CD8-positive, alpha-beta T cell (primary cell): ENCODE measurements at regions of chr2 and their contacts with region 1.

Region 1: GRCh38 chr2:201780674-201781581 is at the start of gene ALS2:
- DNase-seq: peak; percentile 88 to 97 (median 94)
- ATAC-seq: peak; percentile 91
- H3K4me3 ChIP-seq: peak within 1 kb of the TSS; percentile 80 to 89
- H3K4me3 Mint-ChIP-seq: peak within 1 kb of the TSS; percentile 98
- H3K27ac ChIP-seq: peak within 1 kb of the TSS; percentile 94
- H3K27ac Mint-ChIP-seq: peak within 1 kb of the TSS; percentile 98
- H3K4me1 ChIP-seq: peaks cover 16% of the 10 kb centered on the region
- H3K4me1 Mint-ChIP-seq: peaks cover 27% of the 10 kb centered on the region
- H3K27me3 ChIP-seq: no peaks in the 10 kb centered on the region
- H3K27me3 Mint-ChIP-seq: peaks cover 3% of the 10 kb centered on the region
- CTCF ChIP-seq: no peak
- total RNA-seq, gene ALS2: 6.6 to 9.0 TPM

Region 2: GRCh38 chr2:200373973-200374416 is 1406.9 kb before region 1 on chr2:
- CTCF ChIA-PET with region 1: no interaction called
- POLR2A ChIA-PET with region 1: no interaction called
- intact Hi-C with region 1: loop called in 1 of 2 experiments (anchors 10 kb)
- DNase-seq: peak in 7 of 9 experiments; percentile 4 to 79 (median 25)
- ATAC-seq: peak; percentile 92
- H3K4me3 ChIP-seq: peak overlapping the region; percentile 51 to 69
- H3K4me3 Mint-ChIP-seq: peak overlapping the region; percentile 87
- H3K27ac ChIP-seq: peak overlapping the region; percentile 40 to 52
- H3K27ac Mint-ChIP-seq: peak overlapping the region; percentile 90
- H3K4me1 ChIP-seq: peaks cover 23% of the 10 kb centered on the region
- H3K4me1 Mint-ChIP-seq: peaks cover 44% of the 10 kb centered on the region
- H3K27me3 ChIP-seq: no peaks in the 10 kb centered on the region
- H3K27me3 Mint-ChIP-seq: no peaks in the 10 kb centered on the region
- CTCF ChIP-seq: no peak

Region 3: GRCh38 chr2:200525882-200526651 is 1254.9 kb before region 1 on chr2 and contains the start of gene SGO2:
- CTCF ChIA-PET with region 1: no interaction called
- POLR2A ChIA-PET with region 1: no interaction called
- intact Hi-C with region 1: loop called (anchors 5 kb)
- DNase-seq: peak; percentile 92 to 97 (median 95)
- ATAC-seq: peak; percentile 100
- H3K4me3 ChIP-seq: peak within 1 kb of the TSS; percentile 73 to 84
- H3K4me3 Mint-ChIP-seq: peak within 1 kb of the TSS; percentile 91
- H3K27ac ChIP-seq: peak within 1 kb of the TSS; percentile 18 to 71
- H3K27ac Mint-ChIP-seq: peak within 1 kb of the TSS; percentile 87
- H3K4me1 ChIP-seq: peaks cover 7% of the 10 kb centered on the region
- H3K4me1 Mint-ChIP-seq: peaks cover 10% of the 10 kb centered on the region
- H3K27me3 ChIP-seq: no peaks in the 10 kb centered on the region
- H3K27me3 Mint-ChIP-seq: no peaks in the 10 kb centered on the region
- CTCF ChIP-seq: no peak
- total RNA-seq, gene SGO2: 0.52 to 0.69 TPM

Region 4: DNA sequence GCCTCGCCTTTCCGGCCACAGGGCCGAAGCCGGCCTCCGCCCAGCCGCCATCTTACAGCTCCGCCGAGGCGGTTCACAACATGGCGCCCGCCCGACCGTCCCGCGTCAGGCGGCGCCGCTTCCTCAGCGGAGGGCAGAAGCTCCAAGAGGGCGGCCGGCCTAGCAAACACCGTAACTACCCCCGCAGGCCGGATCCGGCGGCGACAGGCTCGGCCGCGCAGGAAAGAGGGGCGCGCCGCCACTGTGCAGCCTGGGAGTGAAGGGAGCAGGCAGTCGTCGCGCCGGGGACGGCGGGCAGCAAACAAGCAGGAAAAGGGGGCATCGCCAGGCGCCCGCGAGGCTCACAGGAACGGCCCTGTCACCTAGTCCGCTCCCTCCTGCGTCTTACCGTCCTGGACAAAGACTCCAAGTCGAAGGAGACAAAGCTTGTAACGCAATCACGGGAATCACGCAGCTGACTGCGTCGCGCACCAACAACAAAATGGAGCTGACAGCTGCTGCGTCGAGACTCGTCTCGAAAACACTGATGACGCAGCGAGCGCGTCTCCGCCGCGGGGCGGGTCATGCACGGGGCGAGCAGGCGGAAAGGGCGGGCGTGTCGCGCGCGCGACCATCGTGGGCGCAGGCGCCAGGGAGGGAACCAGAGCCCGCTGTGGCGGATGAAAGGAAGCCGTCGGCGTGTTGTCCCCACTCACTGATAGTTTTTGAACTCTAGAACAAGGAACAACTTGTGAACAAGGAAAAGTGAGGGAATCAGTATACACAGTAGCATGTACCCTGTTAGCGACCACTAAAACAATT is 916.6 kb before region 1 on chr2 and contains the start of gene CLK1:
- CTCF ChIA-PET with region 1: no interaction called
- POLR2A ChIA-PET with region 1: interaction called, 12 read pairs
- intact Hi-C with region 1: loop called in 1 of 2 experiments (anchors 2 kb)
- DNase-seq: peak; percentile 94 to 99 (median 98)
- ATAC-seq: peak; percentile 78
- H3K4me3 ChIP-seq: peak within 1 kb of the TSS; percentile 84 to 98
- H3K4me3 Mint-ChIP-seq: peak within 1 kb of the TSS; percentile 96
- H3K27ac ChIP-seq: peak within 1 kb of the TSS; percentile 98 to 100
- H3K27ac Mint-ChIP-seq: peak within 1 kb of the TSS; percentile 100
- H3K4me1 ChIP-seq: peaks cover 29% of the 10 kb centered on the region
- H3K4me1 Mint-ChIP-seq: peaks cover 43% of the 10 kb centered on the region
- H3K27me3 ChIP-seq: no peaks in the 10 kb centered on the region
- H3K27me3 Mint-ChIP-seq: no peaks in the 10 kb centered on the region
- CTCF ChIP-seq: no peak
- total RNA-seq, gene CLK1: 1,353 to 1,404 TPM

Region 5: GRCh38 chr2:202033321-202034248 is 252.7 kb after region 1 on chr2 and contains the start of gene FZD7:
- CTCF ChIA-PET with region 1: interaction called, 4 read pairs
- POLR2A ChIA-PET with region 1: no interaction called
- intact Hi-C with region 1: loop called (anchors 1 to 2 kb)
- DNase-seq: peak; percentile 66 to 91 (median 83)
- ATAC-seq: peak; percentile 78
- H3K4me3 ChIP-seq: peak within 1 kb of the TSS; percentile 77 to 84
- H3K4me3 Mint-ChIP-seq: peak within 1 kb of the TSS; percentile 88
- H3K27ac ChIP-seq: peak within 1 kb of the TSS in 1 of 2 experiments; percentile 14
- H3K27ac Mint-ChIP-seq: no peak within 1 kb of the TSS
- H3K4me1 ChIP-seq: peaks cover 25% of the 10 kb centered on the region
- H3K4me1 Mint-ChIP-seq: peaks cover 13% of the 10 kb centered on the region
- H3K27me3 ChIP-seq: peaks cover 26 to 29% of the 10 kb centered on the region in 2 experiments
- H3K27me3 Mint-ChIP-seq: peaks cover 12% of the 10 kb centered on the region
- CTCF ChIP-seq: no peak
- total RNA-seq, gene FZD7: 0.73 to 0.97 TPM

Region 6: GRCh38 chr2:202265467-202266277 is 484.7 kb after region 1 on chr2 and contains the start of gene NOP58:
- CTCF ChIA-PET with region 1: no interaction called
- POLR2A ChIA-PET with region 1: no interaction called
- intact Hi-C with region 1: loop called in 1 of 2 experiments (anchors 5 kb)
- DNase-seq: peak; percentile 80 to 97 (median 87)
- ATAC-seq: peak; percentile 75
- H3K4me3 ChIP-seq: peak within 1 kb of the TSS; percentile 80 to 100
- H3K4me3 Mint-ChIP-seq: peak within 1 kb of the TSS; percentile 52
- H3K27ac ChIP-seq: peak within 1 kb of the TSS; percentile 97 to 98
- H3K27ac Mint-ChIP-seq: peak within 1 kb of the TSS; percentile 43
- H3K4me1 ChIP-seq: peaks cover 18% of the 10 kb centered on the region
- H3K4me1 Mint-ChIP-seq: peaks cover 21% of the 10 kb centered on the region
- H3K27me3 ChIP-seq: no peaks in the 10 kb centered on the region
- H3K27me3 Mint-ChIP-seq: no peaks in the 10 kb centered on the region
- CTCF ChIP-seq: no peak
- total RNA-seq, gene NOP58: 345 to 352 TPM

Region 7: DNA sequence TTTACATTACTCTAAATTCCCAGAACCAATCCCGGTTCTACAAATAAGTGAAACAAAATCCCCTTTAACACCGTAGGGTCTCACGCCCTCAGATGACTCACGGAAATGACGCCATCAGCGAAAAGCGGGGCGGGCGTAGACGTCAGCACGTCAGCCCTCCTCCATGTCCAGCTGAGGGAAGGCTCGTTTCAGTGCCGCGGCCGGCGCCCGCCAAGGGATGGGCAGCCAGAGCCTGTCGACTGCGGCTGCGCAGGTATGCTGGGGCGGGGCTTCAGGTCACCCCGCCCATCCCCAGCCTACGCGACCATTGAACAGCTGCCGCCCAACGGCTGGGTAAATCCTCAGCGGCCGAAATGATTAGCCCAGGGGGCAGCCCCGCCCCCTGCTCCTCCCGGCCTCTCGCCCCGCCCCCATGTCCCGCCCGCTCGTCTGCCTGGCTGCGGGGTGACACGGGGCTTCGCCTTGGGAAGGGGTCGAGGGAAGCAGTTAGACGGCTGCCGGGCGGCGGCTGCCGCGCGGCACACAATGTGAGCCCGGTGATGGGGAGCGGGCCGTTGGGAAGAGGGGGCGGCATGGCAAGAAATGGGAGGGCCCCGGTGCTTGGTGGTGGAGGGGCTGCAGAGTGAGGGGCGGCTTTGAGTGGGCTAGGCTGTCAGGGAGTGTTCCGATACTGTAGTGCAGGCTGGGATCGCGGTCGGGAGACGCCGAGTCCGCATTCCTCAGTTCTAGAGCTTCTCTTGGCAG is 1233.7 kb after region 1 on chr2 and contains the start of gene NBEAL1:
- CTCF ChIA-PET with region 1: no interaction called
- POLR2A ChIA-PET with region 1: interaction called, 3 read pairs
- intact Hi-C with region 1: loop called in 1 of 2 experiments (anchors 5 kb)
- DNase-seq: peak; percentile 92 to 99 (median 95)
- ATAC-seq: peak; percentile 90
- H3K4me3 ChIP-seq: peak within 1 kb of the TSS; percentile 77 to 97
- H3K4me3 Mint-ChIP-seq: peak within 1 kb of the TSS; percentile 88
- H3K27ac ChIP-seq: peak within 1 kb of the TSS; percentile 86 to 89
- H3K27ac Mint-ChIP-seq: peak within 1 kb of the TSS; percentile 92
- H3K4me1 ChIP-seq: peaks cover 37% of the 10 kb centered on the region
- H3K4me1 Mint-ChIP-seq: peaks cover 46% of the 10 kb centered on the region
- H3K27me3 ChIP-seq: no peaks in the 10 kb centered on the region
- H3K27me3 Mint-ChIP-seq: no peaks in the 10 kb centered on the region
- CTCF ChIP-seq: no peak
- total RNA-seq, gene NBEAL1: 11.2 to 13.2 TPM